H1 (cell line): ENCODE measurements at regions of chr18 and their contacts with region 1.

Region 1: GRCh38 chr18:13394801-13395200 is 176.2 kb downstream of the LDLRAD4 start:
- DNase-seq: no peak
- H3K4me3 ChIP-seq: no peak overlapping the region
- H3K27ac ChIP-seq: no peak overlapping the region
- H3K4me1 ChIP-seq: no peaks in the 10 kb centered on the region
- H3K27me3 ChIP-seq: no peaks in the 10 kb centered on the region
- CTCF ChIP-seq: no peak
- EP300 ChIP-seq: no peak
- POLR2A ChIP-seq: no peak
- RAD21 ChIP-seq: no peak

Region 2: DNA sequence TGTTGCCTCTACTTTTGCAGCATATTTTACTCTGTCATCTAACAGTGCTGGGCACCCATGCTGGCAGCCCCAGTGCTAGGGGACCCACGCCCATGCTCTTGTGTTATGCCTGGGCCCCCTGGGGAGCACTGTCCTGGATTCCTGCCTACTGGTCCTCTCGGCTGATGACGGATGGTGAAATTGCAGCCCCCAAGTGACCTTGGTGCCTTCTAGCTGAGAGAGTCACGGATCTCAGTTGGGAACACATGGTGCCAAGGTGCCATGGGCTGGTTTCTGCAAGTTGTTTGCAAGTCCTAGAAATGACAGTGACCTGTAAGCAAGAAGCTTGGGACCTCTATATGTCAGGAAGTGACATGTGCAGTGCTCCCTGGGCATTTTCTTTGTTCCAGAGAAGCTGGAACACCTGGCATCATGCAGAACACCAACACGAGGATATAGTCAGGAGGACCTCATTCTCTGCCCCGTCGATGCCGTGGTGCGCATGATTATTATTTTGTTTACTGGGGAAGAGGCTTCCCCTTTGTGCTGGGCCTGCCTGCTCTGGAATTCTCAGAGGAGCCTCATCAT is 11.3 kb after region 1 on chr18:
- CTCF ChIA-PET with region 1: interaction called, 10 read pairs
- POLR2A ChIA-PET with region 1: no interaction called
- DNase-seq: no peak
- H3K4me3 ChIP-seq: no peak overlapping the region
- H3K27ac ChIP-seq: no peak overlapping the region
- H3K4me1 ChIP-seq: no peaks in the 10 kb centered on the region
- H3K27me3 ChIP-seq: no peaks in the 10 kb centered on the region
- CTCF ChIP-seq: no peak
- EP300 ChIP-seq: no peak
- POLR2A ChIP-seq: no peak
- RAD21 ChIP-seq: no peak